Activated T-helper 1 cell treated with anti-CD3 and anti-CD28 coated beads, Interleukin-12 subunit alpha, Interleukin-12 subunit beta, Interleukin-2, Interleukin-4 antibody, amounts not matched to agents 30 ng/mL and 10 ng/mL and 1 ng/mL, durations not matched to agents 14 hours and 24 hours and 36 hours (primary cell): ENCODE measurements at regions of chr10 and their contacts with region 1.

Region 1: DNA sequence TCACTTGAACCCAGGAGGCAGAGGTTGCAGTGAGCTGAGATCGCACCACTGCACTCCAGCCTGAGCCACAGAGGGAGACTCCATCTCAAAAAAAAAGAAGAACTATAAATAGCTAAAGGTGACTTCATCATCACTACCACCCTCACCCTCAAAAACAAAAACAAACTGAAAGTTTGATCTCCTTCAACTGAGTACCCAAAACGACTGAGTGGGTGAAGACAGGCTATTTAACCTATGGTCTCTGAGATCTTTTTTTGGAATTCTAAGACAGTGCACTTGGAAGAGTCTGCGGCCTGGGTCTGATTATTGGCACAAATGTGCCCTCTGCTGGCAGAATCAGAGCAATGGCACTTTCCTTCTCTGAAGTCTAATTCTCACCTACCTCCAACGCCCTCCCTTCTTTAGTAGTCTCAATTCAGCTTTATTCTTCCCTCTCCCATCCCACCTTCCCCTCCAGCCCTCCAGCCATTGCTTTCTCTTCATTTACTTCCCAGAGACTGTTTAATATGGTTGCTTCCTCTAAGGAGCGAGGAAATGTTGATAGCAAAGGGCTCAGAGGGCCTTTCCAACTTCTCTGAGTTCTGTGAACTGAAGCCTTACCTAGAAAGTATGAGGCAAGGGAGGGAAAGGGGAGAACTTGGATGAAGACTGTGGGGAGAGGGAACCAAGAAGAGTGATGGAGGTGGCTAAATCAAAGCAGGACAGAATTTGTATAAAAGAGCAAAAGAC is 2.9 kb upstream of the MYOZ1 start:
- DNase-seq: peak; percentile 24
- H3K4me3 Mint-ChIP-seq: peak overlapping the region; percentile 11
- H3K27ac Mint-ChIP-seq: peak overlapping the region; percentile 2
- H3K4me1 Mint-ChIP-seq: peaks cover 23% of the 10 kb centered on the region
- H3K27me3 Mint-ChIP-seq: peaks cover 15% of the 10 kb centered on the region

Region 2: DNA sequence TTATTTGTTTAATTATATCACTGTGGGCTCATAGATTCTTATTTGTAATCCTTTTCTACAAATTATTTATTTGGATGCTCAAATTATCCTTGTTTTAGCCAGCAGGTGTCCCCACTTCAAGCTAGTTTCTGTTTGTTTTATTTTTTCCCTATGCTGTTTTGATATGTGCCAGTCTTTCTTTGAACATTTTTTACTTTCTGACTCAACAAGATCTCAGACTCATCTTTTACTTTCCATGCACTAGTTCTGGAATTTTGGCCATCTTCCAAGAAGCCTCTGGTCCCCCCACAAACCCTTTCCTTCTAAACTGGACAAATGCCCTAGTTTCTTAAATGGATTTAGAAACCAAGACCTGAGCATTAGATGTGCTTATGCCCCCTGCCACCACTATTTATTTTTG is 380.2 kb before region 1 on chr10:
- intact Hi-C with region 1: loop called (anchors 1 kb)
- DNase-seq: no peak
- H3K4me3 Mint-ChIP-seq: no peak overlapping the region
- H3K27ac Mint-ChIP-seq: no peak overlapping the region
- H3K4me1 Mint-ChIP-seq: peaks cover 10% of the 10 kb centered on the region
- H3K27me3 Mint-ChIP-seq: peaks cover 15% of the 10 kb centered on the region

Region 3: GRCh38 chr10:73358331-73359279 is 285.6 kb before region 1 on chr10 and contains the start of gene CFAP70:
- intact Hi-C with region 1: loop called (anchors 5 kb)
- DNase-seq: peak; percentile 90
- H3K4me3 Mint-ChIP-seq: peak within 1 kb of the TSS; percentile 93
- H3K27ac Mint-ChIP-seq: peak within 1 kb of the TSS; percentile 86
- H3K4me1 Mint-ChIP-seq: peaks cover 20% of the 10 kb centered on the region
- H3K27me3 Mint-ChIP-seq: peaks cover 8% of the 10 kb centered on the region
- total RNA-seq, gene CFAP70: 0.26 and 0.34 TPM in 2 replicates

Region 4: GRCh38 chr10:73529089-73529832 is 114.9 kb before region 1 on chr10:
- intact Hi-C with region 1: loop called (anchors 1 kb)
- DNase-seq: peak; percentile 44
- H3K4me3 Mint-ChIP-seq: no peak overlapping the region
- H3K27ac Mint-ChIP-seq: no peak overlapping the region
- H3K4me1 Mint-ChIP-seq: no peaks in the 10 kb centered on the region
- H3K27me3 Mint-ChIP-seq: peaks cover 2% of the 10 kb centered on the region

Region 5: DNA sequence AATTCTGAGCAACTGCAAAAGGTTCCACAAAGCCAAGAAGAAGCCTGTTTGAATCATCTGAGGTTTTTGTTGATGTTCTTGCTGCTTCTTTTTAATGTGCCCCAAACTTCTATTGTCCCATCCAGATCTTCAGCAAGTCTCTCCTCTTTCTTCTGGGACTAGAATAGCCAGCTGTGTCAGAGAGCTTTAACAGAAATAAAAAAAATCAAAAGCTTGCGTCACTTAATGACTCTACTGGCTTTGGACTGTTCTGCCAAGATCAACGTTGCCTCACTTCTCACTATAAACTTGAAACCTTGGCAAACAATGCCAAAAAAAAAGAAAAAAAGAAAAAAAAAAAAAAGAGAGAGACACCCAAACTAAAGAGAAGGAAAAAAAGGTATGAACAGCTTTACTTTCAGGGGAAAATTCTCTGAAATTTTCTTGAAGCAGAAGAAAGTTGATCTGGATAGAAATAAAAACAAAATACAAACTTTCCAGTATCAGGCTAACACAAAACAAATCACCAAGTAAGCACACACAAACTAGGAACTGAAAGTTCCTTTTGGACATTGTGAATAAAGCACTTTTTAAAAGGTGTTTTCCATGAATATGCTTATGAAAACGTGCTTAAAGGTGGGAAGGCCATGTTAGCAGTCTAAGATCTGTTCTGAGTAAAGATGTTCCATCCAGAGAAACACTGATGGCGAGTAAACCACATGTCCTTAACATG is 67.8 kb before region 1 on chr10:
- intact Hi-C with region 1: no loop called
- DNase-seq: no peak
- H3K4me3 Mint-ChIP-seq: no peak overlapping the region
- H3K27ac Mint-ChIP-seq: no peak overlapping the region
- H3K4me1 Mint-ChIP-seq: no peaks in the 10 kb centered on the region
- H3K27me3 Mint-ChIP-seq: no peaks in the 10 kb centered on the region